Vagina (tissue), 2 donors: ENCODE measurements at regions of chr16 and their contacts with region 1.

Region 1: GRCh38 chr16:22684574-22685458 is 129.1 kb upstream of the HS3ST2 start:
- DNase-seq: no peak
- H3K4me3 ChIP-seq: no peak overlapping the region
- H3K27ac ChIP-seq: peak overlapping the region; percentile 45
- H3K4me1 ChIP-seq: no peaks in the 10 kb centered on the region
- H3K27me3 ChIP-seq: no peaks in the 10 kb centered on the region
- CTCF ChIP-seq: no peak
- POLR2A ChIP-seq: no peak

Region 2: GRCh38 chr16:21158208-21159110 is 1526.4 kb before region 1 on chr16 and contains the start of gene LDAF1:
- intact Hi-C with region 1: loop called (anchors 5 kb)
- DNase-seq: peak in 1 of 2 donors; percentile 92
- H3K4me3 ChIP-seq: peak within 1 kb of the TSS; percentile 59 to 74
- H3K27ac ChIP-seq: peak within 1 kb of the TSS; percentile 94
- H3K4me1 ChIP-seq: peaks cover 58% of the 10 kb centered on the region
- H3K27me3 ChIP-seq: no peaks in the 10 kb centered on the region
- CTCF ChIP-seq: no peak
- POLR2A ChIP-seq: peak in 1 of 2 donors; percentile 67
- total RNA-seq, gene LDAF1: 63.8 TPM